A673 (cell line): ENCODE measurements at regions of chr11 and their contacts with region 1.

Region 1: GRCh38 chr11:102495161-102496042 is 35.1 kb downstream of the MMP7 start:
- DNase-seq: peak; percentile 87
- H3K4me3 ChIP-seq: no peak overlapping the region
- H3K27ac ChIP-seq: no peak overlapping the region
- H3K4me1 ChIP-seq: no peaks in the 10 kb centered on the region
- H3K27me3 ChIP-seq: no peaks in the 10 kb centered on the region
- CTCF ChIP-seq: peak; percentile 81

Region 2: DNA sequence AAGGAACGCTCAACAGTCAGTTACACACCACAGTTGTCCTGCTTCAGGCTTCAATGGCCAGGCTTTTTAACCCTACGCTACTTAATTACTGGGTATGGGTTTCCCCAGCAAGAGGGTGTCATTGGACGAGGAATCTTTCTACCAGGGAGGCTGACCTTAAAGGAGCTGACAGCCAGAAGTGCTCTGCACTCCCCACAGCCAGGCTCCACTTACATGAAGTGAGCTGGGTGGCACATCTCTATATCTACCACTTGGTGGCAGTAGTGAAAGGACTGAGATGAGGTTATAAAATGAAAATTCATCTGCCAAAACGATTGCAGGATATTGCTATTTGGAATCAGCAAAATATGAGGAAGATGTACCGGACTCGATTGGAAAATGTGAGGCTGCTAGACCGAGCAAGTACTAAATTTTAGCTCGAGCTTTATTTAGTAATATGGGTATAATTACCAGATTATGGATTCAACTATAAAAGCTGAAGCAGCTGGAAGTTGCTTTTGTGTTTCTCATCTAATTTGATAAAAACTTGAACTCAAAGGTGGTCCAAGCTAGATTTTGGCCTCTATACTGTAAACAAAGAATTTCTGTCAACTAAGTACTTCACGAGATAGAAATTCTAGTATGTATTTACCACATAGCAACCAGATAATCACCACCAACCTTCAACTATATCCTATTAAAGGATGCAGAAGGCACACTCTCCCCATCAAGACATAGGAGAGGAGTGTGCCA is 634.5 kb before region 1 on chr11:
- CTCF ChIA-PET with region 1: no interaction called
- POLR2A ChIA-PET with region 1: no interaction called
- intact Hi-C with region 1: loop called (anchors 10 kb)
- DNase-seq: peak; percentile 74
- H3K4me3 ChIP-seq: no peak overlapping the region
- H3K27ac ChIP-seq: no peak overlapping the region
- H3K4me1 ChIP-seq: peaks cover 10% of the 10 kb centered on the region
- H3K27me3 ChIP-seq: no peaks in the 10 kb centered on the region
- CTCF ChIP-seq: peak; percentile 88

Region 3: DNA sequence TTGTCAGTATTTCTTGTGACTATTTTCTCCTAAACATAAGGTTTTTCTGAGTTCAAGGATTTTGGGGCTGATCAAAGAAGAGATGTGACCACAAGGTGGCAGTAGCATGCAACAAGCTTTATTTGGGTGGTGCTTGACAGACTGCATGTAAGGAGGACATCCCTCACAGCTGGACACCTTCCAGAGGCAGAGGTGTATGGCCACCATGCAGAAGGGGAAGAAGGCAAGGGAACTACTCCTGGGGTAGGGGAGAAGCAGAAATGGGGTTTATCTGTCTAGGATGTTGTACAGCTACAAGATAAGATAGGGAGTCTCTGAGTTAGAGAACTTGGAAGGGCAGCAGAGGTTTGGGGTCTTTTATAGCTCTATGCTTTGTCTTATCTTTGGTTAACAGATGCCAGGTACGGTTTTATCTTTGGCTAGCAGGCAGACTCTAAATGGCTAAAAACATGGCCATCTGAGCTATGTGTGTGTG is 153.5 kb before region 1 on chr11:
- CTCF ChIA-PET with region 1: interaction called, 9 read pairs
- POLR2A ChIA-PET with region 1: no interaction called
- intact Hi-C with region 1: loop called (anchors 1 kb)
- DNase-seq: peak; percentile 91
- H3K4me3 ChIP-seq: no peak overlapping the region
- H3K27ac ChIP-seq: no peak overlapping the region
- H3K4me1 ChIP-seq: no peaks in the 10 kb centered on the region
- H3K27me3 ChIP-seq: no peaks in the 10 kb centered on the region
- CTCF ChIP-seq: peak; percentile 94

Region 4: DNA sequence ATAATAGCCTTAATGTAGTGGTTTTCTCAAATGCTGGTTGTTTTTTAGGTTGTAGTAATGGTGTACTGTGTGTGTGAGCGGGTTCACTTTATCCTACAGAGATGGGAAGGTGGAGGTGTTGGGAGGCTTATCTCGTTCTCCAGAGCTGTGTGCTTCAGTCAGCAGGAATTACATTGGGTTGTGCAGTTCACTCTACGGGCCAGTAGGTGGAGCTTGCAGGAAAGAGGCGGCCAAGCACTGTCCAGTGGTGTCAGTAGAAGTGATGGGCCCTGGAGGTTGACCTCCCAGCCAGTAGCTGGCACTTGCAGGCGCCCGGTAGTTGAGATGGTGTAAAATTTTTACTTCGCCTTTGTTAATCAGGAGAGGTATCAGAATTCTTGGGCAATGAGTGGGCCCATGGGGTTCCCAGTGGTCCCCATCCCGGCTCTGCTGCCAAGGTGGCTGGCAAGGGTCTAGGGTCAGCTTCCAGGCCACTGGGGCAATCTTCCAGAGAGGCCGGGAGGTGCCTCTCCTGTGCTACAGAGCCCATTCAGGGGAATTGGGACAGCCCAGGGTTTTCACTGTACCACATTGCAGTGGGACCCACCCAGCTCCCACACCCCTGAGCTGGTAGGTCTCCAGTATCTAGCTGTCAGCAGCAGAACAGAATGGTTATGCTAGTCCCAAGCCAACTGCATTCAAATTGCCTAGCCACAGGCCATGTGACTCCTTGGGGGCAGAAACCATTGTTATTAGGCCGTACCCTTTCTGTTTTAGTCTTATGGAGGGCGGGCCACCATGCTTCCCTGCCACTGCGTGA is 104.5 kb before region 1 on chr11:
- CTCF ChIA-PET with region 1: interaction called, 6 read pairs
- POLR2A ChIA-PET with region 1: no interaction called
- intact Hi-C with region 1: loop called (anchors 1 kb)
- DNase-seq: peak; percentile 73
- H3K4me3 ChIP-seq: no peak overlapping the region
- H3K27ac ChIP-seq: no peak overlapping the region
- H3K4me1 ChIP-seq: no peaks in the 10 kb centered on the region
- H3K27me3 ChIP-seq: no peaks in the 10 kb centered on the region
- CTCF ChIP-seq: peak; percentile 96

Region 5: DNA sequence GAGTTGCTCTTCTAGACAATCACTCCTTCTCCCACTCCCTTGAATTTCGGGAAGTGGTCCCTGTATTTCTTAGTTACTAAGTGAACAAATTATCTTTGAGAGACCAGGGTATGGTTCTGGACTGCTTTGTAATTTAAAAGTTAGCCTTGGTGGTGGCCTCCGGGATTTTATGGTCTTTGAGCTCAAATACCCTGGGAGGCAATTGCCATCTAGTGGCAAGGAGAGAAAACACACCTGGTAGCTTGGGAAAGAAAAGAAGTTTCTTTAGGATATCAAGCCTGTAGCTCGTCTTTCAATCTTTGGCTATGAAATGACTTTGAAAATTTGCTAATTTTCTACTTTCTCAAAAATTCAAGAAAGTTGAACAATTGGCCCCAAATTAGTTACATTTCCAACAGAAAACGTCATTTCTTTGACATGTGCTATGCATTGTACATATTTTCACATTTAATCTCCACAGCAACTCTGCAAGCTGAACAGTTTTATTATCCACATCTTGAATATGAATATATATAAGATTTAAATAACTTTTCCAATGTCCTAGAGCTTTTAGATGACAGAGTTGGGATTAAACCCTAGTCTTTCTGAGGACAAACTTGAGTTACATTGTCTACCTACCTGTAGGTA is 171.0 kb after region 1 on chr11:
- CTCF ChIA-PET with region 1: interaction called, 5 read pairs
- POLR2A ChIA-PET with region 1: no interaction called
- intact Hi-C with region 1: loop called (anchors 2 kb)
- DNase-seq: peak; percentile 79
- H3K4me3 ChIP-seq: no peak overlapping the region
- H3K27ac ChIP-seq: no peak overlapping the region
- H3K4me1 ChIP-seq: no peaks in the 10 kb centered on the region
- H3K27me3 ChIP-seq: no peaks in the 10 kb centered on the region
- CTCF ChIP-seq: peak; percentile 95